HepG2 (cell line): ENCODE measurements at regions of chr3 and their contacts with region 1.

Region 1: GRCh38 chr3:169668957-169669681 is 5.6 kb upstream of the MECOM start:
- DNase-seq: peak; percentile 29
- ATAC-seq: peak; percentile 99
- H3K4me3 ChIP-seq: peak overlapping the region in 2 of 3 experiments; percentile 22 to 58; a peak in 2 of 6 replicates
- H3K27ac ChIP-seq: no peak overlapping the region
- H3K4me1 ChIP-seq: peaks cover 15% of the 10 kb centered on the region
- H3K27me3 ChIP-seq: peaks cover 7 to 57% of the 10 kb centered on the region in 2 experiments
- CTCF ChIP-seq: peak; percentile 93
- EP300 ChIP-seq: no peak
- POLR2A ChIP-seq: no peak
- RAD21 ChIP-seq: peak; percentile 93

Region 2: DNA sequence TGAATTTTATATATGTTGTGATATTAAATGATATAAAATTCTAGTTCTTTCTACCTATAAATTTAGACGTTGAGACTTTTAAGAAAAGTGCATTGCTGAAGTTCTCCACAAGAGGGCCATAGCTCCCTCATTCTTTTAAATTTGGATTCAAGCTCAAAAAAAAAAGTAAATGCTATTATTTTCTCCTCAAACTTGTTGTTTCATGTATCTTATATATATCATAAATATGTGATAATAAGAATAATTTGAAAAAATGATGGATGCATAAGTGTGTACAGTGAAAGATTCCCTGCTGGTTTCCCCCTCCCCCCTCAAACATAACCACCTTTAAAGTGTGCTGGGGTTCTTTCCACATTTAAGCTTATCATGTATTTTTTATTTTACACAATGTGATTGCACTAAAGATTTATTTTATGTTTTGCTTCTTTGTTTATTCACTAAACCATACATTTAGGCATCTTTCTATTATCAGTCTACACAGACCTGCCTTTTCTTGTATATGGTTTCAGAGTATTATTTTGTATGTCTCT is 804.0 kb before region 1 on chr3:
- CTCF ChIA-PET with region 1: no interaction called
- POLR2A ChIA-PET with region 1: no interaction called
- in situ Hi-C with region 1: loop called (anchors 10 kb)
- intact Hi-C with region 1: no loop called
- DNase-seq: no peak
- ATAC-seq: no peak
- H3K4me3 ChIP-seq: no peak overlapping the region
- H3K27ac ChIP-seq: no peak overlapping the region
- H3K4me1 ChIP-seq: peaks cover 87% of the 10 kb centered on the region
- H3K27me3 ChIP-seq: no peaks in the 10 kb centered on the region
- CTCF ChIP-seq: peak; percentile 48; the same call in 1 of the 2 replicates
- EP300 ChIP-seq: no peak
- POLR2A ChIP-seq: no peak
- RAD21 ChIP-seq: no peak

Region 3: GRCh38 chr3:169041677-169042171 is 627.4 kb before region 1 on chr3:
- CTCF ChIA-PET with region 1: interaction called, 3 read pairs
- POLR2A ChIA-PET with region 1: no interaction called
- in situ Hi-C with region 1: no loop called
- intact Hi-C with region 1: loop called (anchors 5 kb)
- DNase-seq: peak; percentile 12
- ATAC-seq: peak; percentile 46; the same call in 1 of the 3 replicates
- H3K4me3 ChIP-seq: no peak overlapping the region
- H3K27ac ChIP-seq: no peak overlapping the region
- H3K4me1 ChIP-seq: no peaks in the 10 kb centered on the region
- H3K27me3 ChIP-seq: no peaks in the 10 kb centered on the region
- CTCF ChIP-seq: no peak
- EP300 ChIP-seq: no peak
- POLR2A ChIP-seq: no peak
- RAD21 ChIP-seq: no peak

Region 4: GRCh38 chr3:169133178-169134161 is 535.6 kb before region 1 on chr3:
- CTCF ChIA-PET with region 1: no interaction called
- POLR2A ChIA-PET with region 1: no interaction called
- in situ Hi-C with region 1: no loop called
- intact Hi-C with region 1: loop called (anchors 5 kb)
- DNase-seq: no peak
- ATAC-seq: no peak
- H3K4me3 ChIP-seq: no peak overlapping the region
- H3K27ac ChIP-seq: no peak overlapping the region
- H3K4me1 ChIP-seq: no peaks in the 10 kb centered on the region
- H3K27me3 ChIP-seq: no peaks in the 10 kb centered on the region
- CTCF ChIP-seq: no peak
- EP300 ChIP-seq: no peak
- POLR2A ChIP-seq: no peak
- RAD21 ChIP-seq: no peak

Region 5: DNA sequence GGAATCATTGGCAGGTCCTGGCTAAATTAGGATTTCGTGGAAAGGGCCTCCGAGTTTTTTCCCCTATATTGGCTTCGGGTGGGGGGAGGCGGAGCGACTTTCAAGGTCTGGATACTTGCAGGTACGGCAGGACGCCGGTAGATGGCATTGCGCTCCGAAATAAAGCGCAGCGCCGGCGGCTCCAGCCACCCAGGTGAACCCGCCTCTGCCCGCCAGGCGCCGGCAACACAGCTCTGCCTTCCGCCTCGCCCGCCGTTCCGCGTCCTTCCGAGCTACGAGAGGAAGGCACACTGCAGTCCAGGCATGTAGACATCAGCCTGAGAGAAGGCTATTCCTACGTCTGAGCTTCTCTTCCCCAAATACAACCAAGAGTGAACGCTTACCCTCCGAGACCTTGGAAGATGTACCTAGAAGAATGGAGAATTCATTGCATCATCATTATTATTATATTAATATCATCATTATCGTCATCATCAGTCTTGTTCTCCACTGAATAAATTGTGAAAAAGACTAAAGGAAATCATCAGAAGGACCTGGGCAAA is 519.7 kb before region 1 on chr3:
- CTCF ChIA-PET with region 1: interaction called, 5 read pairs
- POLR2A ChIA-PET with region 1: no interaction called
- in situ Hi-C with region 1: loop called (anchors 5 kb)
- intact Hi-C with region 1: loop called (anchors 1 kb)
- DNase-seq: peak; percentile 45
- ATAC-seq: peak; percentile 99
- H3K4me3 ChIP-seq: peak overlapping the region in 1 of 3 experiments; percentile 23; a peak in 1 of 6 replicates
- H3K27ac ChIP-seq: no peak overlapping the region
- H3K4me1 ChIP-seq: peaks cover 17% of the 10 kb centered on the region
- H3K27me3 ChIP-seq: peaks cover 1 to 33% of the 10 kb centered on the region in 2 experiments; a peak in 4 of 5 replicates
- CTCF ChIP-seq: peak; percentile 87
- EP300 ChIP-seq: no peak
- POLR2A ChIP-seq: no peak
- RAD21 ChIP-seq: peak; percentile 87

Region 6: DNA sequence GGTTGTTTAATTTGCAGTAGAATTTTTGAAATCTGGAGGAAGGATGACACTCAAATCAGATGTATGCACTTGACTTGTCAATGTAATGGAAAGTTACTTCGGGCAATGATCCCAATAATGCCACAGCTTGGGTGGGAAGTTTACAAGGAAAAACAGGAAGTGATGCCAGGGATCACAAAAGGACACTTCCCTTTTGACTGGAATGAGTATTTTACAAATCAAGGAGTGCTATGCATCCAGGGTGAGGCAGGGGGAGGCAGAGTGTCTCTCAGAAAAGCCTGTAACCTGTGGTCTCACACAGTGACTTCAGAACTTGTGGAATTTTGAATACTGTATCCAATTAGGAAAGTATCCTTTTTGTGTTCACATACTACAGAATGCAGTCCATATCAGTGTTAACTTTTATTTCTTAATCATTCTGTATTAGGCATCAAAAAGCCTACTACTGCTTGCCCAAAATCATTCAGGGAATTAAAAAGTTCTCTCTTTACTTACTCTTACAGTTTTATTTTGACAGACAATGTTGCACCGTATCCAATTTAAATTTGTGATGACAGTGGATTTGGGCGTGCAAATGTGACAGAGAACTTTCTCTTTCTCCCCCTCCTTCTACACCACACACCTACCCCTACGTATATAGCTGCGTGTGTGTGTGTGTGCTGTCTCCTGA is 450.7 kb before region 1 on chr3:
- CTCF ChIA-PET with region 1: no interaction called
- POLR2A ChIA-PET with region 1: no interaction called
- in situ Hi-C with region 1: no loop called
- intact Hi-C with region 1: loop called (anchors 1 kb)
- DNase-seq: peak; percentile 28
- ATAC-seq: peak; percentile 89
- H3K4me3 ChIP-seq: no peak overlapping the region
- H3K27ac ChIP-seq: no peak overlapping the region
- H3K4me1 ChIP-seq: no peaks in the 10 kb centered on the region
- H3K27me3 ChIP-seq: no peaks in the 10 kb centered on the region
- CTCF ChIP-seq: peak; percentile 58
- EP300 ChIP-seq: no peak
- POLR2A ChIP-seq: no peak
- RAD21 ChIP-seq: no peak

Region 7: GRCh38 chr3:169619793-169620192 is 49.3 kb before region 1 on chr3:
- CTCF ChIA-PET with region 1: no interaction called
- POLR2A ChIA-PET with region 1: no interaction called
- in situ Hi-C with region 1: no loop called
- intact Hi-C with region 1: no loop called
- DNase-seq: no peak
- ATAC-seq: no peak
- H3K4me3 ChIP-seq: no peak overlapping the region
- H3K27ac ChIP-seq: no peak overlapping the region
- H3K4me1 ChIP-seq: no peaks in the 10 kb centered on the region
- H3K27me3 ChIP-seq: no peaks in the 10 kb centered on the region
- CTCF ChIP-seq: no peak
- EP300 ChIP-seq: no peak
- POLR2A ChIP-seq: no peak
- RAD21 ChIP-seq: no peak